ENCODE measurements at regions of chr16 and their contacts with region 1.

Region 1: DNA sequence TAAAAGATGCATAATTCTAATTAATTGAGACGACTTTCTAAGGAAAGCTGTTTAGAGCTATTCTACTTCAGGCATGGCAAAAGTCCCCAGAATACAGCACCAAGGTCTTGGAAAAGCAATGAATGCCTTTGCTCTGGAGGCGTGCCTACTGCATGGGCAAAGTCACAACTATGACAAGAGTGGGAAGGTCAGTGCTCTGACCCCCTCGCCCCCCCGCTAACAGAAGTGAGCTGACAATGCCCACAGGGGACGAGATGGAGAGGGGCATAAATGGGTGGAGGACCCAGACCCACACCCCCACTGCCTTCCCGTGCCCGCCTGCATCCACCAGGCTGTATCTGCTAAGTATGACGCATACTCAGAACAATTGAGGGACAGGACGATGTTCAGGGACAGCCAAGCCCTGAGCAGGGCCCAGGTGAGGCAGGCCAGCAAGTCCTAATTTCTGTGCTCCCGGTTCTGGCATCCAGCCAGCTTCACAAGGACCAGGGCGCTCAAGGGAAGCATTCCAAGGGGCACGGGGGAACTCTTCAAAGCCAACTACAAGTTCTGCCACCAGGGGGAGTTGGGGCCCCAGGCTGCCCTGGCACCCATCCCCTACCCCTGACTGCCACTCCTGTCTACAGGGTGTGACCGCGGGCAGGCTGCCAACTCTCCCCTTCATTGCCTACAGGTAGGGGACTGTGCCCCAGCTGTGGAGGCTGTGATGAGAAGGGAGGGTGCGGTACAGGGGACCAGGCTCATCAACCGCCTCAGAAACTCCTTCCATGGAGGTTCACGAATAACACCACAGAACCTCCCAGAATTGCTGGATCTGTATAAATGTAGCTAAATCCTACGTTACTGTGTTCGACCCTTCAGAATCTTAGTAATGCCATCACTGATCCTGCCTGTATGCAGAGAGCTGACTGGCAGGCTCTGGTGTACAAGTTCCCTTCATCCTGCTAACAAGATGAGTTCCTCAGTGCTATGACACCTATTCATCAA is 20.8 kb downstream of the NPRL3 start:
- DNase-seq: peak; percentile 71
- H3K4me3 ChIP-seq: no peak overlapping the region
- H3K27ac ChIP-seq: no peak overlapping the region
- H3K4me1 ChIP-seq: no peaks in the 10 kb centered on the region
- CTCF ChIP-seq: peak; percentile 85

Region 2: GRCh38 chr16:180938-181667 is 63.4 kb after region 1 on chr16:
- CTCF ChIA-PET with region 1: no interaction called
- POLR2A ChIA-PET with region 1: no interaction called
- intact Hi-C with region 1: loop called (anchors 1 kb)
- DNase-seq: peak; percentile 76
- H3K4me3 ChIP-seq: no peak overlapping the region
- H3K27ac ChIP-seq: no peak overlapping the region
- H3K4me1 ChIP-seq: peaks cover 4% of the 10 kb centered on the region
- CTCF ChIP-seq: peak; percentile 91